HepG2 (cell line): ENCODE measurements at regions of chr4 and their contacts with region 1.

Region 1: DNA sequence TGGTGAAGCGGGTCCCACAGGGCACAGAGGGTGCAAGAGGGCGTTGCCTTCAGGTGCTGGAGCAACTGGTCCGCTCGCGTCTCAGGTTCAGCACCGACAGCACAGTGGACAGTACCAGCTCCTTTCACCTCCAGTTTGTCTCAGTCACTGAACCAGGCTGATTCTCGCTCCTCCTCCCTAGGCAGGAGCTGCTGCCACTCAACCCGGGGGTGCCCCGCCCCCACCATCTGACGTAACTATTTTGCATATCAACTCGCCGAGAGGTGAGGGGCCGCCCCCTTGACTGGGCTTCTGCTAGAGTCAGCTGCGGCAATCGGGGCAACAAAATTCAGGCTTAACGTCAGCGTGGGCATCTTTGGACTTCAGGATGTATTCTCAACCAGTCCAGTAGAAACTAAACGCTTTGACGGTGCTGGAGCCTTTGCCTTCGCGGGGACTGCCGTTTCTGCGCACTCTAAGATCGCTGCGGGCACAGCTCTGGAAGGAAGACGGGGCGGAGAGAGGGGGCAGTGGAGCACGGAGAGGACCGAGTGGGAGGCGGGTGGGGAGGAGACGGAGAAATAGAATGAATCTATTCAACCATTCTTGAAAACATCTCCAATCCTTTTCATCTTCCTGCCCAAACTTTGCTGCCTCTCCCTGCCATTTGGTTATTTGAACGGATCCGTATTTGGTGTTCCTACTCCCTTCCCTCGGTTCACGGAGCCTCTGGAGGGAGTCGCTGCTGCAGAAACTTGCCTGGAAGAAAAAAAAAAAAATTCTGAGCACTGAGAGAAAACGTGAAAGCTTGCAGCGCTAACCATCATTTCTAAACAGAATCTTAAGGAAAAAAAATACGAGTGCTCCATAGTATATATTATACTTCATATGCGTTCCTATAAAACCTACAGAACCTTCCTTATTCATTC is at the start of gene FSTL5:
- DNase-seq: peak; percentile 16
- ATAC-seq: peak; percentile 82
- H3K4me3 ChIP-seq: peak within 1 kb of the TSS in 1 of 3 experiments; percentile 23; a peak in 1 of 6 replicates
- H3K27ac ChIP-seq: no peak within 1 kb of the TSS
- H3K4me1 ChIP-seq: no peaks in the 10 kb centered on the region
- H3K27me3 ChIP-seq: no peaks in the 10 kb centered on the region; a peak in 1 of 5 replicates
- CTCF ChIP-seq: no peak
- EP300 ChIP-seq: no peak
- POLR2A ChIP-seq: no peak
- RAD21 ChIP-seq: no peak
- total RNA-seq, gene FSTL5: 0.07 and 0.28 TPM in 2 replicates

Region 2: GRCh38 chr4:161320377-161320776 is 843.7 kb before region 1 on chr4:
- CTCF ChIA-PET with region 1: interaction called, 10 read pairs
- POLR2A ChIA-PET with region 1: no interaction called
- in situ Hi-C with region 1: loop called (anchors 25 kb)
- intact Hi-C with region 1: no loop called
- DNase-seq: peak; percentile 48
- ATAC-seq: peak; percentile 91
- H3K4me3 ChIP-seq: no peak overlapping the region
- H3K27ac ChIP-seq: no peak overlapping the region
- H3K4me1 ChIP-seq: no peaks in the 10 kb centered on the region
- H3K27me3 ChIP-seq: no peaks in the 10 kb centered on the region
- CTCF ChIP-seq: peak; percentile 57
- EP300 ChIP-seq: no peak
- POLR2A ChIP-seq: no peak
- RAD21 ChIP-seq: no peak

Region 3: GRCh38 chr4:161555689-161556660 is 608.1 kb before region 1 on chr4:
- CTCF ChIA-PET with region 1: no interaction called
- POLR2A ChIA-PET with region 1: no interaction called
- in situ Hi-C with region 1: loop called (anchors 25 kb)
- intact Hi-C with region 1: loop called (anchors 10 kb)
- DNase-seq: no peak
- ATAC-seq: no peak
- H3K4me3 ChIP-seq: no peak overlapping the region
- H3K27ac ChIP-seq: no peak overlapping the region
- H3K4me1 ChIP-seq: no peaks in the 10 kb centered on the region
- H3K27me3 ChIP-seq: no peaks in the 10 kb centered on the region
- CTCF ChIP-seq: no peak
- EP300 ChIP-seq: no peak
- POLR2A ChIP-seq: no peak
- RAD21 ChIP-seq: no peak

Region 4: DNA sequence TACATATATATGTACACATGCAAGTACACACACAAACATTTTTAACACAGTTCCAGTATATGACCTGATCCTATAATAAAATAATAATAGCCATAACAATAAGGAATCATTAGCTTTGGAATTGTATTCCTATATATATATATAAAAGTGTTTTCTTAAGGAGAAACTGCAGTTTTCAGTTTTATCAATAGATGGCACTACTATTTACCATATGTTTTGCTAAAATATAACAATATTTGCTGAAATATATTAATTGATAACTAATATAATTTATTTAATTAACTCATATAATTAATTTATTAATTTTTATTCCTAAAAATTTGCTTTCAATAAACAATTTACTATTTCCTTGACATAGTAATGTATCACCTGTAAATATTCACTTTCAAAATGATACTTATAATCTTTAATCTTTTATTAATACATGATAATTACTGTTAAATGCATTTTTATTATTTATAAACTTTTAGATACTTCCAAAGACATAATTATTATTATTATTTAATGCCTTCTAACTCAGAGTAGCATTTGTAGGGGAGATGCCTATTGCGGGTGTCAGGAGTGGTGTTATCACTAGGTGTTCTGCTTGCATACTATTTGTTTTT is 599.8 kb before region 1 on chr4:
- CTCF ChIA-PET with region 1: interaction called, 4 read pairs
- POLR2A ChIA-PET with region 1: no interaction called
- in situ Hi-C with region 1: loop called (anchors 25 kb)
- intact Hi-C with region 1: loop called (anchors 10 kb)
- DNase-seq: no peak
- ATAC-seq: no peak
- H3K4me3 ChIP-seq: no peak overlapping the region
- H3K27ac ChIP-seq: no peak overlapping the region
- H3K4me1 ChIP-seq: no peaks in the 10 kb centered on the region
- H3K27me3 ChIP-seq: no peaks in the 10 kb centered on the region
- CTCF ChIP-seq: no peak
- EP300 ChIP-seq: no peak
- POLR2A ChIP-seq: no peak
- RAD21 ChIP-seq: no peak

Region 5: DNA sequence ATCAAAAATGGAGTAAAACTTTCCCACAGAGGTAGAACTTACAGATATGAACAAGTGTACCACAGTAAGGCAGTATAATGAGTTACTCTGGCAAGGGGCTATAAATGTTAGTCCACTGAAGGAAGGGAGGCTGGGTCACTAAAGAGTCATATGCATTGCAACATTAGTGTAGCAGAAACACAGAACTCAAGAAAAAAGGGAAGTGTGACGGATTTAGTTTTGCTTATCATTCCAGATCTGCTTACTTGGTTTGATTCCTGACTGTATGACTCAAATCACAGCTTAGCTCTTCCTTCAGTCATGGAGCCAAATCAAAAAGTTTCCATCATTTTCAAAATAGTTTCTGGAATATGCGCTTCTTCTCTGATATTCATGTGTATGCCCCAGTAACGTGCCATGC is 149.0 kb before region 1 on chr4:
- CTCF ChIA-PET with region 1: no interaction called
- POLR2A ChIA-PET with region 1: no interaction called
- in situ Hi-C with region 1: no loop called
- intact Hi-C with region 1: no loop called
- DNase-seq: no peak
- ATAC-seq: no peak
- H3K4me3 ChIP-seq: no peak overlapping the region
- H3K27ac ChIP-seq: no peak overlapping the region
- H3K4me1 ChIP-seq: no peaks in the 10 kb centered on the region
- H3K27me3 ChIP-seq: no peaks in the 10 kb centered on the region
- CTCF ChIP-seq: no peak
- EP300 ChIP-seq: no peak
- POLR2A ChIP-seq: no peak
- RAD21 ChIP-seq: no peak

Region 6: GRCh38 chr4:162131256-162131655 is 32.9 kb before region 1 on chr4:
- CTCF ChIA-PET with region 1: no interaction called
- POLR2A ChIA-PET with region 1: no interaction called
- in situ Hi-C with region 1: no loop called
- intact Hi-C with region 1: no loop called
- DNase-seq: no peak
- ATAC-seq: no peak
- H3K4me3 ChIP-seq: no peak overlapping the region
- H3K27ac ChIP-seq: no peak overlapping the region
- H3K4me1 ChIP-seq: no peaks in the 10 kb centered on the region
- H3K27me3 ChIP-seq: peaks cover 0 to 2% of the 10 kb centered on the region in 2 experiments; a peak in 1 of 5 replicates
- CTCF ChIP-seq: no peak
- EP300 ChIP-seq: no peak
- POLR2A ChIP-seq: no peak
- RAD21 ChIP-seq: no peak

Region 7: DNA sequence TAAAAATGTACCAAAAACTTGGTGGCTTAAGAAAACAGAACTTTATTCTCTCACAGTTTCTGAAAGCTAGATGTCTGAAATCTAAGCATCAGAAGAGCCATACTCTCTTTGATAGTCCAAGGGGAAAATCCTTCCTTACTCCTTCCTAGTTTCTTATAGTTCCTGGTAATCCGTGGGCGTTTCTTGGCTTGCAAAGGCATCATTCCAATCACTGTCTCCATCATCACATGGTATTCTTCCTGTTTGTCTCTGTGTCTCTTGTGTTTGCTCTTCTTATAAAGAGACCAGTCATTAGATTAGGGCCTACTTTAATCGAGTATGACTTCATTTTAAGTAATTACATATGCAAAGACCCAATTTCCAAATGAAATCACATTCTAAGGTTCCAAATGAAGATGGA is 118.6 kb after region 1 on chr4:
- CTCF ChIA-PET with region 1: no interaction called
- POLR2A ChIA-PET with region 1: no interaction called
- in situ Hi-C with region 1: no loop called
- intact Hi-C with region 1: no loop called
- DNase-seq: no peak
- ATAC-seq: no peak
- H3K4me3 ChIP-seq: no peak overlapping the region
- H3K27ac ChIP-seq: no peak overlapping the region
- H3K4me1 ChIP-seq: no peaks in the 10 kb centered on the region
- H3K27me3 ChIP-seq: no peaks in the 10 kb centered on the region
- CTCF ChIP-seq: no peak
- EP300 ChIP-seq: no peak
- POLR2A ChIP-seq: no peak
- RAD21 ChIP-seq: no peak

Region 8: GRCh38 chr4:162352580-162353107 is 188.5 kb after region 1 on chr4:
- CTCF ChIA-PET with region 1: no interaction called
- POLR2A ChIA-PET with region 1: no interaction called
- in situ Hi-C with region 1: no loop called
- intact Hi-C with region 1: no loop called
- DNase-seq: no peak
- ATAC-seq: no peak
- H3K4me3 ChIP-seq: no peak overlapping the region
- H3K27ac ChIP-seq: no peak overlapping the region
- H3K4me1 ChIP-seq: no peaks in the 10 kb centered on the region
- H3K27me3 ChIP-seq: no peaks in the 10 kb centered on the region
- CTCF ChIP-seq: no peak
- EP300 ChIP-seq: no peak
- POLR2A ChIP-seq: no peak
- RAD21 ChIP-seq: no peak